CD8-positive, alpha-beta T cell (primary cell): ENCODE measurements at regions of chr22 and their contacts with region 1.

Region 1: GRCh38 chr22:30079952-30080533 is at the start of gene HORMAD2:
- DNase-seq: peak in 2 of 9 experiments; percentile 3 to 14
- ATAC-seq: no peak
- H3K4me3 ChIP-seq: no peak within 1 kb of the TSS
- H3K4me3 Mint-ChIP-seq: no peak within 1 kb of the TSS
- H3K27ac ChIP-seq: no peak within 1 kb of the TSS
- H3K27ac Mint-ChIP-seq: no peak within 1 kb of the TSS
- H3K4me1 ChIP-seq: no peaks in the 10 kb centered on the region
- H3K4me1 Mint-ChIP-seq: peaks cover 7% of the 10 kb centered on the region
- H3K27me3 ChIP-seq: no peaks in the 10 kb centered on the region
- H3K27me3 Mint-ChIP-seq: peaks cover 11% of the 10 kb centered on the region
- CTCF ChIP-seq: no peak
- total RNA-seq, gene HORMAD2: not detected

Region 2: DNA sequence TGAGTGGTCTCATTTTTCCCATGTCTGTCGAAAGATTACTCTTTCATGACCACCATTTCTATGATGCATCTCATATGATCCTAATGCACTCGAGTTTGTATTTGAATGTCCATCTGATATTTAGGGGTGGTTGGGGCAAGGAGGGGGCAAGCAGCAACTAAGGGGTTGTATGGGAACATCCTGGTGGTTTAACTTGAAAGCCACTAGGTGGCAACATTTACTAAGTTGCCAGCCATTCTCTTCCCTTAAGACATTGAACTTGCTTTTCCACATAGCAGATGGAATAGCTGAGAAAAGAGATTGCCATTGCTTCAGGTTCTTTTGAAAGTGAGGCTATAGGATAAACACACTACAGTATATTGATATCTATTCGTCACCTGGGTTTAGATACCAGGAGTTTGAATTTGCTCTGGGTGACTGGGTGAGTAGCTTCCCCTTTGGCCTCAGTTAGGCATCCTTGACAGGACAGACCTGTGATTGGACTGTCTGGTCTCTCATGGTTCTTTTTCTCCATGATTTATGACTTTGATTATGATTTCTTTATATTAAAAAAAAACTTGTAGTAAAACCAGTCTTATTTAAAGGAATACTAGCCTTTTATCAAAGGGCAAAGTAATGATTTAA is 444.2 kb before region 1 on chr22:
- CTCF ChIA-PET with region 1: no interaction called
- POLR2A ChIA-PET with region 1: no interaction called
- intact Hi-C with region 1: loop called in 1 of 2 experiments (anchors 10 kb)
- DNase-seq: peak in 2 of 9 experiments; percentile 34 to 51
- ATAC-seq: no peak
- H3K4me3 ChIP-seq: no peak overlapping the region
- H3K4me3 Mint-ChIP-seq: no peak overlapping the region
- H3K27ac ChIP-seq: no peak overlapping the region
- H3K27ac Mint-ChIP-seq: no peak overlapping the region
- H3K4me1 ChIP-seq: no peaks in the 10 kb centered on the region
- H3K4me1 Mint-ChIP-seq: peaks cover 29% of the 10 kb centered on the region
- H3K27me3 ChIP-seq: no peaks in the 10 kb centered on the region
- H3K27me3 Mint-ChIP-seq: no peaks in the 10 kb centered on the region
- CTCF ChIP-seq: peak; percentile 47